ENCODE measurements at regions of chr20 and their contacts with region 1.

Region 1: DNA sequence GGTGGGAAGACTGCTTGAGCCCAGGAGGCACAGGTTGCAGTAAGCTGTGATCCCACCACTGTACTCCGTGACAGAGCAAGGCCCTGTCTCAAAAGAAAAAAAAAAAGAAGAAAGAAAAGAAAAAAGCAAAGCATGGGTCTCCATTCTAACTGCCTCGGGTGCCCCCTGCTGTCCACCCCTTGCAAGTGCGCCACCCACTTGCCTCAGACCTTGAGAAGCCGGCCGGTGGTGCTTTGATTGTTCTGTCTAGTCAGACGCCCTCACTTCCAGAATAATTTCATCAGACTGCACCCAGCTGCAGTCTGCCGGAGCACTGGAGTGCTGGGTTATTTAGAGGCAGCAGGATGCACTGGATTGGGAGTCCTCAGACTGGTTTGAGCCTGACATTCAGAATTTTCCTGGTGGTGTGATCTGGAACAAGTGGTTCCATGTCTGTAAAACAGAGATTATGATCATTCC is 17.6 kb upstream of the TM9SF4 start:
- DNase-seq: no peak
- ATAC-seq: peak; percentile 95
- H3K4me3 ChIP-seq: no peak overlapping the region
- H3K27ac ChIP-seq: no peak overlapping the region
- H3K4me1 ChIP-seq: peaks cover 8% of the 10 kb centered on the region
- H3K27me3 ChIP-seq: no peaks in the 10 kb centered on the region; a peak in 1 of 4 replicates
- CTCF ChIP-seq: peak; percentile 82 to 95 (median 94)
- EP300 ChIP-seq: no peak
- POLR2A ChIP-seq: no peak
- RAD21 ChIP-seq: peak; percentile 90

Region 2: GRCh38 chr20:31691646-31692275 is 400.2 kb before region 1 on chr20:
- CTCF ChIA-PET with region 1: no interaction called
- POLR2A ChIA-PET with region 1: no interaction called
- RAD21 ChIA-PET with region 1: no interaction called
- SMC1A ChIA-PET with region 1: no interaction called
- in situ Hi-C with region 1: no loop called
- intact Hi-C with region 1: no loop called
- DNase-seq: no peak
- ATAC-seq: peak; percentile 78
- H3K4me3 ChIP-seq: no peak overlapping the region
- H3K27ac ChIP-seq: peak overlapping the region; percentile 63
- H3K4me1 ChIP-seq: peaks cover 15% of the 10 kb centered on the region
- H3K27me3 ChIP-seq: no peaks in the 10 kb centered on the region
- CTCF ChIP-seq: no peak
- EP300 ChIP-seq: no peak
- POLR2A ChIP-seq: no peak
- RAD21 ChIP-seq: no peak

Region 3: GRCh38 chr20:31849455-31849925 is 242.4 kb before region 1 on chr20:
- CTCF ChIA-PET with region 1: interaction called, 11 read pairs
- POLR2A ChIA-PET with region 1: no interaction called
- RAD21 ChIA-PET with region 1: interaction called, 10 read pairs
- SMC1A ChIA-PET with region 1: interaction called, 8 read pairs
- in situ Hi-C with region 1: loop called (anchors 10 kb)
- intact Hi-C with region 1: loop called (anchors 1 kb)
- DNase-seq: no peak
- ATAC-seq: no peak
- H3K4me3 ChIP-seq: no peak overlapping the region
- H3K27ac ChIP-seq: no peak overlapping the region
- H3K4me1 ChIP-seq: peaks cover 5% of the 10 kb centered on the region; the same call in 1 of the 2 replicates
- H3K27me3 ChIP-seq: no peaks in the 10 kb centered on the region; a peak in 2 of 4 replicates
- CTCF ChIP-seq: no peak
- EP300 ChIP-seq: no peak
- POLR2A ChIP-seq: no peak
- RAD21 ChIP-seq: no peak

Region 4: GRCh38 chr20:31861346-31862156 is 230.4 kb before region 1 on chr20:
- CTCF ChIA-PET with region 1: interaction called, 4 read pairs
- POLR2A ChIA-PET with region 1: interaction called, 4 read pairs
- RAD21 ChIA-PET with region 1: no interaction called
- SMC1A ChIA-PET with region 1: no interaction called
- in situ Hi-C with region 1: loop called (anchors 10 kb)
- intact Hi-C with region 1: no loop called
- DNase-seq: no peak
- ATAC-seq: peak; percentile 93
- H3K4me3 ChIP-seq: peak overlapping the region; percentile 53
- H3K27ac ChIP-seq: no peak overlapping the region
- H3K4me1 ChIP-seq: peaks cover 10% of the 10 kb centered on the region
- H3K27me3 ChIP-seq: peaks cover 0 to 9% of the 10 kb centered on the region in 2 experiments; a peak in 1 of 4 replicates
- CTCF ChIP-seq: no peak
- EP300 ChIP-seq: no peak
- POLR2A ChIP-seq: peak; percentile 62; the same call in 1 of the 2 replicates
- RAD21 ChIP-seq: no peak

Region 5: GRCh38 chr20:32052090-32052777 is 39.7 kb before region 1 on chr20 and contains the start of gene HCK:
- CTCF ChIA-PET with region 1: interaction called, 17 read pairs
- POLR2A ChIA-PET with region 1: no interaction called
- RAD21 ChIA-PET with region 1: interaction called, 15 read pairs
- SMC1A ChIA-PET with region 1: interaction called, 11 read pairs
- in situ Hi-C with region 1: no loop called
- intact Hi-C with region 1: loop called (anchors 5 kb)
- DNase-seq: no peak
- ATAC-seq: peak; percentile 85
- H3K4me3 ChIP-seq: peak within 1 kb of the TSS; percentile 88
- H3K27ac ChIP-seq: peak within 1 kb of the TSS; percentile 64
- H3K4me1 ChIP-seq: peaks cover 15% of the 10 kb centered on the region
- H3K27me3 ChIP-seq: peaks cover 3 to 7% of the 10 kb centered on the region in 2 experiments
- CTCF ChIP-seq: peak in 1 of 3 experiments; percentile 5; a peak in 1 of 6 replicates
- EP300 ChIP-seq: no peak
- POLR2A ChIP-seq: peak; percentile 55; the same call in 1 of the 2 replicates
- RAD21 ChIP-seq: no peak
- polyA plus RNA-seq, gene HCK: 1.3 to 2.1 TPM

Region 6: GRCh38 chr20:32079655-32080109 is 12.2 kb before region 1 on chr20:
- CTCF ChIA-PET with region 1: interaction called, 36 read pairs
- POLR2A ChIA-PET with region 1: no interaction called
- RAD21 ChIA-PET with region 1: interaction called, 12 read pairs
- SMC1A ChIA-PET with region 1: interaction called, 21 read pairs
- in situ Hi-C with region 1: no loop called
- intact Hi-C with region 1: no loop called
- DNase-seq: no peak
- ATAC-seq: no peak
- H3K4me3 ChIP-seq: no peak overlapping the region
- H3K27ac ChIP-seq: no peak overlapping the region
- H3K4me1 ChIP-seq: no peaks in the 10 kb centered on the region
- H3K27me3 ChIP-seq: no peaks in the 10 kb centered on the region
- CTCF ChIP-seq: no peak
- EP300 ChIP-seq: no peak
- POLR2A ChIP-seq: no peak
- RAD21 ChIP-seq: no peak

Region 7: DNA sequence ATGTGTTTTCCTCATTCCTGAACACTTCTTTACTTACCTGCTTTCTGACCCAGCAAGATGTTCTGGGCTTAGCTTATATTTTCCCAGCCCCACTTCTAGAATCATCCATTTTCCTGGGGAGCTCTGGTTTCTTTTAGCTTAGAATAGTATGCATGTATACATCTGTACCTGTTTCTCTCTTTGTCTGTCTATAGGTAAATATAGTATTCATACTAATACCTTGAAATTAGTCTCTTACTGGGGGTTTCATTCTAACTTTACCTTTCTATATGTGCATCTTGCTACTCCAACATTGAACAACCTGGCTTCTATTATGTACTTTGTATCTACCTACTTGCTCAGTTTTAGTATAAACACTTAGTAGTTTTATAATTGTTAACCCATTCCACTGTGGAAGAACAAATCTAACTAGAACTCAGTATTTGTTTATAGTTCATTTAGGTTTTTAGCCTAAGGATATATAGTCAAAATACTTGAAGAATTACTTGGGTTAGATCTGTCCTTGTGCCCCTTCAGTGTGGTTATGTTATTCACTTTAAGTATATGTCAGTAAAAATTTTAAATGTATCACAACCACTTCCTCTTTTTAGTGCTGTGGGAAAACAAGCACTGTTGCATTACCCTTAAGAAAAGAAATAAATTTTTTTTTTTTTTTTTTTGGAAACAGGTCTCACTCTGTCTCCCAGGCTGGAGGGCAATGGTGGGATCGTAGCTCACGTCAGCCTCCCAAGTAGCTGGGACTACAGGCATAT is 320.2 kb after region 1 on chr20:
- CTCF ChIA-PET with region 1: no interaction called
- POLR2A ChIA-PET with region 1: no interaction called
- RAD21 ChIA-PET with region 1: no interaction called
- SMC1A ChIA-PET with region 1: no interaction called
- in situ Hi-C with region 1: no loop called
- intact Hi-C with region 1: no loop called
- DNase-seq: peak; percentile 11
- ATAC-seq: peak; percentile 90
- H3K4me3 ChIP-seq: no peak overlapping the region
- H3K27ac ChIP-seq: no peak overlapping the region
- H3K4me1 ChIP-seq: peaks cover 18% of the 10 kb centered on the region
- H3K27me3 ChIP-seq: no peaks in the 10 kb centered on the region
- CTCF ChIP-seq: no peak
- EP300 ChIP-seq: no peak
- POLR2A ChIP-seq: no peak
- RAD21 ChIP-seq: no peak